Endothelial cell of umbilical vein (primary cell): ENCODE measurements at regions of chr2 and their contacts with region 1.

Region 1: DNA sequence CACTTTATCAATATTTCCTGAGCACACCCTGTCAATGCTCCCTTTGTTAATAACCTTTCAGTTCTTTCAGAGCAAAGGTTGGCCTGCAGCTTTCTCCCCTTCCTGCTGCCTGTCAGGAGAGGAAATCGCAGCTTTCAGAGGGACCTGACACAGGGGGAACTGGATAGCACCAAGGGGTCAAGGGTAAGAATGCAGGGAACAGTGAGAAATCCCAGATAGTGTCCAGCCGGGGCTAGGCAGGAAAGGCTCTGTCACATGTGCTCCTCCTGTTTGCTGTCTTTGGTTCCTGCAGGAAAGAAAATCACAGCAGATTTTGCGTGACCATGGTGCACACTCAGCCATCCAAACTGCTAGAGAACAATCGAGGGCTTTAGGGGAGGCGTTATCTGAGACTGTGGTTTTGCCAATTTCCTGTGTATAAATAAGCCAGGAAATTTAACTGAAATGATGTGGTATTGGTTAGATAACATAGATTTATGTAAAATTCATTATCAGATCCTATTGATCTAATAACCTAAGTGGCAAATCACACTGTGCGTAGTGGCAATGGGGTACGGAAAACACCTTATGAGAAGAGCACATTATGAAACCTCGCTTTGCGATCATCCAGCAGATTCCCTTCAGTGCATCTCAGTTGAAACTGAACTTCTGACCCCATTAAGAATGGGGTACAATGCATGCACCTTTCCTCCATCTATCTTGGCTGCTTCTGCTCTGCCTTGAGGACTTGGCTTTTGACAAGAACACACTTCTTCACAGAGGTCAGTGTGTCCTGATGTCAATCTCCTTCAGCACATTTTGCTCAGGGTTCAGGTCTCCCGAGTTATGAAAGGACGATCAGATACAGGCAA is 178.0 kb downstream of the ICOS start:
- DNase-seq: peak; percentile 99
- H3K4me3 ChIP-seq: peak overlapping the region in 1 of 3 experiments; percentile 11
- H3K27ac ChIP-seq: peak overlapping the region; percentile 86
- H3K4me1 ChIP-seq: peaks cover 77% of the 10 kb centered on the region
- H3K27me3 ChIP-seq: no peaks in the 10 kb centered on the region
- CTCF ChIP-seq: no peak
- POLR2A ChIP-seq: peak; percentile 73

Region 2: DNA sequence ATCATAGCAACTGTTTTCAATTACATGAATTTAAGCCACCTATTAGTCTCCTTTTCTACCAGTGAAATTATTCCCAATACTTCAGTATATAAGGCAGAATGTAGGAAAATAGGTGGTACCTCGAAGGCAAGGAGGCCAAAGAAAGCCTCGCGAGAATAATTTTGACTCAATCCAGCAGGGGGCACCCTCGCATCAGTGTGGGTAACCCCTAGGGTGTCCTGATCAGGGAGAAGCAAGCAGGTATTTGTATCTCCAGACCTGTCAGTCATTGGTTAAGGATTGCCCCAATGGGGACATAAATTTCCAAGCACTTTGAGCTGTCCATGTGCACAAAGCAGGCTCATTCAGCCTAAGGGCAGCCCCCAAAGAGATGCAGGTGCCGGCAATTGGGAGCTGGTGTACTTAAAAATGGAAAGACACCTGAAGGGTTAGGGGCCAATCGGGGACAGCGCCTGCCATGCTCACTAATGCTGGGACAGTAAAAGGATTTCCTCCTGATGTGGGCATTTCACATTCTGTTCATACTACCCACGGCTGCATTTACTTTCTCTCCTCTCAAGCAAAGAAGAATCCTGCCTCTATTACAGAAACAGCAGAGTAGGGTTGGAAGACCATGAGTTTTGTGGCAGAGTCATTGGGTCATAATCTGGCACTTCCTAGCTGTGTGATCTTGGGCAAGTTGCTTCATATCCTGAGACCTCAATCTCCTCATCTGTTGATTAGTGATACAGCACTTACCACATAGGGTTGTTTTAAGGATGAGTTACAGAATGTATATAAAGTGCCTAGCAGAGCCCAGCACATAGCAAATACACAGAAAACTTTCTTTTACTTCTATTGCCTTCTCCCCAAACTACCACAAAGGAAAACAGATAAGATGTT is 41.8 kb before region 1 on chr2:
- CTCF ChIA-PET with region 1: no interaction called
- POLR2A ChIA-PET with region 1: no interaction called
- dilution Hi-C with region 1: no loop called
- intact Hi-C with region 1: no loop called
- DNase-seq: peak; percentile 38
- H3K4me3 ChIP-seq: no peak overlapping the region
- H3K27ac ChIP-seq: no peak overlapping the region
- H3K4me1 ChIP-seq: no peaks in the 10 kb centered on the region
- H3K27me3 ChIP-seq: peaks cover 8 to 16% of the 10 kb centered on the region in 2 experiments
- CTCF ChIP-seq: peak; percentile 52 to 62
- POLR2A ChIP-seq: no peak

Region 3: DNA sequence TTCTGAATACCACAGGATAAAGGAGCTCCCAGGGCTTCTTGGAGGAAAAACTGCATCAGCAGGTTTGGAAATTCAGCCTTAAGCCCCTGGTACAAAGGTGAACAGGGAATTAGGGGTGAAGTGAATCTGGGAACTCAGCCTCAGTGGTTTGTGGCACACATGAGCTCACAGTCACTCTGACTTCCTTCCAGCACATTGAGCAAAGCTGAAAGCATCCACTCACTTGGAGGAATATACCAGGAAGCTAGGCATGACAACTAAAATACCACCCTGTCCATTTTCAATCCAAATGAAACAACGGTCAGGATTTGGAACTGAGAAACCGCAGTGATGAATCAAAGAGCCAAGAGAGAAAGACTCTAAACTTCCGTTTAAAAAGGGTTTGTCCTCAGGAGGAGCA is 38.1 kb after region 1 on chr2:
- CTCF ChIA-PET with region 1: no interaction called
- POLR2A ChIA-PET with region 1: no interaction called
- dilution Hi-C with region 1: no loop called
- intact Hi-C with region 1: no loop called
- DNase-seq: no peak
- H3K4me3 ChIP-seq: no peak overlapping the region
- H3K27ac ChIP-seq: no peak overlapping the region
- H3K4me1 ChIP-seq: no peaks in the 10 kb centered on the region
- H3K27me3 ChIP-seq: no peaks in the 10 kb centered on the region
- CTCF ChIP-seq: no peak
- POLR2A ChIP-seq: no peak

Region 4: GRCh38 chr2:204538182-204539018 is 423.9 kb after region 1 on chr2:
- CTCF ChIA-PET with region 1: no interaction called
- POLR2A ChIA-PET with region 1: no interaction called
- dilution Hi-C with region 1: no loop called
- intact Hi-C with region 1: loop called (anchors 1 kb)
- DNase-seq: peak; percentile 93
- H3K4me3 ChIP-seq: peak overlapping the region in 2 of 3 experiments; percentile 6 to 51
- H3K27ac ChIP-seq: peak overlapping the region; percentile 81
- H3K4me1 ChIP-seq: peaks cover 32% of the 10 kb centered on the region
- H3K27me3 ChIP-seq: no peaks in the 10 kb centered on the region
- CTCF ChIP-seq: no peak
- POLR2A ChIP-seq: no peak

Region 5: GRCh38 chr2:204591225-204591624 is 476.7 kb after region 1 on chr2:
- CTCF ChIA-PET with region 1: no interaction called
- POLR2A ChIA-PET with region 1: no interaction called
- dilution Hi-C with region 1: no loop called
- intact Hi-C with region 1: no loop called
- DNase-seq: peak; percentile 47
- H3K4me3 ChIP-seq: no peak overlapping the region
- H3K27ac ChIP-seq: no peak overlapping the region
- H3K4me1 ChIP-seq: no peaks in the 10 kb centered on the region
- H3K27me3 ChIP-seq: no peaks in the 10 kb centered on the region
- CTCF ChIP-seq: no peak
- POLR2A ChIP-seq: no peak

Region 6: DNA sequence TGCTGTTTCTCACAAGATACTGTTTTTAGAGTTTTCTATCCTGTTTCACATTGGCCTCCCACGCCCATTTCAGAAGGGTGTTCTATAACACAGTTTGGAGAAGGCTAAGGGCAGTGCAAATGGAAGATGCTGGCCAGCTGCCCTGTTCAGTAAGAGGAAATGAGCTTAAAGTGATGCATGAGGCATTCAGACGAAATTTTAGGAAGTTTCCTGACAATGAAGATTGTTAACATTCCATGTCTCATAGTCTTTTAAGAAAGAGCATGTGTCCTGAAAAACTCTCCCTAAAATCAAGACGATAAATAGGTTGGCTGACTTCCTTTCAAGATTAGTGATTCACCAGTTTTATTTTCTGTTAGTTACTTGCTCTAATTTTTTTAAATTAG is 1083.6 kb after region 1 on chr2:
- CTCF ChIA-PET with region 1: no interaction called
- POLR2A ChIA-PET with region 1: no interaction called
- dilution Hi-C with region 1: no loop called
- intact Hi-C with region 1: loop called (anchors 2 kb)
- DNase-seq: peak; percentile 83
- H3K4me3 ChIP-seq: peak overlapping the region in 1 of 3 experiments; percentile 15
- H3K27ac ChIP-seq: peak overlapping the region; percentile 79
- H3K4me1 ChIP-seq: peaks cover 22% of the 10 kb centered on the region
- H3K27me3 ChIP-seq: no peaks in the 10 kb centered on the region
- CTCF ChIP-seq: no peak
- POLR2A ChIP-seq: no peak